ENCODE measurements at regions of chr2 and their contacts with region 1.

Region 1: DNA sequence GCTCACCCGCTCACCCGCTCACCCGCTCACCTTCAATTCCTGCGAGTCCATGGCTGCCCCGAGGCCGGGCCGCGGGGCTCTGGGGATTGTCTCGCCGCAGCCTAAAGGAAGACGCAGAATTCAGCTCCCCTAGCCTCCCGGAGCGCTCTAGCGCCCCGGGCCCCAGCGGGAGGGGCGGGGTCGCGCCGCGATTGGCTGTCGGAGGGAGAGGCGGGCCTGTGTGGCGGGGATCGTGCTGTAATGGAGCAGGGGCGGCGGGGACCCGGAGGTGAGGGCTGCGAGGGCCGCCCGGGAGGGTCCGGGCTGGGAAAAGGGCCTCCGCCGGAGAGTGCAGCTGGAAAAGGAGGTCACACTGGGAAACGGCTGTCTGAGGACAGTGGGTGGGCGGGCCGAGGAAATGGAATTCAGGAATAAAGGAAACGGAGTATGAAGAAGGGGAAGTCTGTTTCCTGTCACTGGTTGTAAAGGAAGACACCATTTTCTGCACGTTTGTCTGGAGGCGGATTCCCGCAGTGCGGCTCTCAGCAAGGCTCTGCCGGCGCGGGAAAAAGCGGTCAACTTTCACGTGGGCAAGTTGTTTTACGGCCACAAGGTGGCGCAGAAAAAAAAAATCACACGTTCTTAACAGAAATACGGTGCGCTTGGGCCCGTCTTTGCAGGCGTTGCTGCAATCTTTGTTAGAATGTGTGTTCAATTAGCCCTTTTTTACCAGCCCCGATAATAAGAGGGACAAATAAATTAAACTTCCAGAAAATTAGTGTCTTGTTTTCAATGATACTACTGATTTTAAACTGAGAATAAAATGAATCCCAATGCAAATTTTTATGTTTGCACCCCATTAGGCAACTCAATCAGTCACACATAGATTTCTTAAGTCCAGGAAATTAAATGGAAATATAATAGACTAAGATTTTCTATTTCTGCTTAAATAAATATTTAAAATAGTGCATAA is at the start of gene TTC21B:
- DNase-seq: peak; percentile 95 to 98 (median 98)
- ATAC-seq: peak; percentile 100
- H3K4me3 ChIP-seq: peak within 1 kb of the TSS; percentile 64
- H3K27ac ChIP-seq: peak within 1 kb of the TSS; percentile 94
- H3K4me1 ChIP-seq: peaks cover 2% of the 10 kb centered on the region
- H3K27me3 ChIP-seq: no peaks in the 10 kb centered on the region
- total RNA-seq, gene TTC21B: 10.8 to 19.7 (median 16.7) TPM

Region 2: GRCh38 chr2:166127217-166128155 is 173.6 kb after region 1 on chr2 and contains the start of gene SCN1A:
- intact Hi-C with region 1: loop called in 3 of 4 experiments (anchors 10 kb)
- DNase-seq: peak in 1 of 3 donors; percentile 39
- ATAC-seq: peak in 1 of 2 donors; percentile 28
- H3K4me3 ChIP-seq: no peak within 1 kb of the TSS
- H3K27ac ChIP-seq: no peak within 1 kb of the TSS
- H3K4me1 ChIP-seq: no peaks in the 10 kb centered on the region
- H3K27me3 ChIP-seq: no peaks in the 10 kb centered on the region
- total RNA-seq, gene SCN1A: 0.06 to 0.59 (median 0.29) TPM

Region 3: DNA sequence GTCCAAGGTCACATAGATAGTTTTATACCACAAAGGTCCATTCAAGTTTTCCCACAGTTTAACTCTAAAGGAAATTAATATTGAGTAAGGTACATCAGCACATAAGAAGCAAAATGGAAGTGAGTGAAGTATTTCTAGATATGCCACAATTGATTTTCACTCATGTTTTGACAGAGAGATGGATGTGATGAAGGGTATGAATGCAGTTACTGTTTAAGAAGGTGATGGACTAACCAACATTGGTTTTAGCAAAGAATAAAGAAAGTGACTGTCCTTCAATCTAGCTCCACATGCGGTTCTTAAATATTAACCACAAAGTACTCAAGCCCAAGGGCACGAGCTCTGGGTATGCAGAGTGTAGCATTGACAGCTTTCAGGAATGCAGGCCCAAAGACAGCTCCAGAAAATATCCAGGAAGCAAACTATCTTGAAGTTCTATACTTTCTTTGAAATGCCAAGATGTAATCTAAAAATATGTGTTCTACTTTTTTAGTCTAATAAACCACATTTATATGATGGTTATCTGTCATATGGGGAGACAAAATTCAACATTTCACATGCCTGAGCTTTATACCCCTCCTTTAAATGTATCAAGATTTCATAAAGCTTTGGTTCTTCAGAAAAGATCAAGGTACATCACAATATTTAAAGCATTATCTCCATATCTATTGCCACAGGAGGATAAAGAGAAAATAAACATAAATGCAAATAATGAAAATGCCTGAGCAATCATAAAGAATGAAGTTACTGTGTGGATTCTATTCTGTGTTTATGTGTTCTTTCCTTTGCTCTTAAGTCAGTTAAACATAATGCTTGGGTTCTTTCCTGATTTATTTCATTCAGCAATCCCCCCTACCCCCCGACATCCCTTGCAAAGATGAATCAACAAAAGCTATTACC is 180.6 kb after region 1 on chr2:
- intact Hi-C with region 1: loop called in 3 of 4 experiments (anchors 10 kb)
- DNase-seq: no peak
- ATAC-seq: no peak
- H3K4me3 ChIP-seq: no peak overlapping the region
- H3K27ac ChIP-seq: no peak overlapping the region
- H3K4me1 ChIP-seq: no peaks in the 10 kb centered on the region
- H3K27me3 ChIP-seq: no peaks in the 10 kb centered on the region